ENCODE measurements at regions of chr12 and their contacts with region 1.

Region 1: GRCh38 chr12:12916135-12916944 is 25.0 kb downstream of the GPRC5A start:
- DNase-seq: peak; percentile 95

Region 2: DNA sequence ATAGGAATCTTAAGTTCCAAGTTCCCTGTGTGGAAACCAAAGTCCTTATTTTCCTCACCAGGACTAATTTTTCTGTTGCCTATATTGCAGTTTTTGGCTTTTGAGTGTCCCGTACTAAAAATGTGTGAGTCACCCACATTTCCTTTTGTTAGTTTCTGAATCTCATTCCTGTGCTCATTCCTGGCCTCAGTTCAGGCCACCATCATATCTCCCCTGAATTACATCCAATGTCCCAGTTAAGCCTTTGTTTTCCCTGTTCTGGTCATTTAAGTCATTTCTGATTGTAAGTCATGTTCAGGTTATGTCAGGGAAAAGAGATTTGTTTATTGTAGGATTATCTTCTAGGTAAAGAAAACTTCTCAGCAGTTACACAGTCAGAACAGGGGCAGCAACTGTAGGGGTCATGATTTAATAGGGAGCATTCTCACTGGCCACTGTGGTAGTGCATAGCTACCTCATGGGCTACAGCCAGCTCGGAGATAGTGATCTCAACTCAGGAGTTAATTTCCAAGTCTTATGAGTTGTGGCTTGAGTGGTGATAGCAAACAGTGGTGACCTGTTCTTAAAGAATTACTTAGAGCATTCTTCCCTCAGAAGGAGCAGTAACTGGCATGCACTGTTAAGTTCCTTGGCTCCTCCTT is 96.5 kb before region 1 on chr12:
- intact Hi-C with region 1: no loop called
- DNase-seq: no peak

Region 3: DNA sequence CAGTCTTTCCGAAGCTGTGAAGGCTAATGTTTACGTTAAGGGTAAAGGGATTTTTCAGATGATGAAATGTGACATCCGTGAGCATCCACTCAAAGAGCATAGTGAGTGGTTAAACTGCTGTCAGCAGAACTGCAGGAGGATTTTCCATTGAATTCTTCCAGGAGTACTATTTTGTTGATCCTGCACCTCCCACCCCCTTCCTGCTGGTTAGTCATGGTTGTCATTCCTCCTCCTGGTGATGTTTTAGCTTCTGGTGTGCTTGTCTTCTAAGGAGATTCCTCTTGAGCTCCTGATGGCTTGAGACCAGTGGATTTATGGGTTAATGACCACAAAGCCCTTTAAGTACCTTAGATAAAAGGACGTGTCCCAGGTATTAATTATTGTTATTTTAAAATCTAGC is 38.0 kb after region 1 on chr12:
- intact Hi-C with region 1: no loop called
- DNase-seq: no peak

Region 4: DNA sequence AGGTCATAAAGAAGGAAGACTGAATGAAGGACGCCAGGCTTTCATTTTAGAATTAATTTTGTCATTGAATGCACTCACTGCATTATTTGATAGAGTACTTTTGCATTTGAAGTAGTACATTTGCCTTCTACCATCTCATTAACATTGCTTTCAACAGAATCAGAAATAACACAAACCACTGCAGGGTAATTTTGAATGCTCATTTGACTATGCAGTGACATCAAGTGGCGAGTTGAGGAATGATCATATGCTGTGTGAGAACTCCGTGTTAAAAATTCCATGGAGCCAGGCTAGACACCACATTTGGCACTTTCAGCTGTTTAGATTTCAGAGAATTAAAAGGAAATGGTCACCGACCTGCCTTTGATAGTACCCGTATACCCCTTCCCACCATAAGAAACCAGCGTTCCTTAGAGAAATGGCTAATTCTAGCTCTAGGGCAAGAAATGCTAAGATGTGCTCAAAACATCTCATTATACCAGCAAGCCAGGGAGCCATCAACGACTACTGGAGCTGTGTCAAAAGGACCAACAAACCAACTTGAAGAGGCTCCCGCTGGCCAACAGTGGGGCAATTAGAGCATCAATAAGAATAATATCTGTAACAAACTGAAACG is 67.2 kb after region 1 on chr12:
- intact Hi-C with region 1: loop called (anchors 5 kb)
- DNase-seq: no peak

Region 5: GRCh38 chr12:13208533-13209435 is 292.4 kb after region 1 on chr12:
- intact Hi-C with region 1: loop called (anchors 5 to 10 kb)
- DNase-seq: no peak

Region 6: GRCh38 chr12:13233830-13234641 is 317.7 kb after region 1 on chr12:
- intact Hi-C with region 1: loop called in 1 of 2 experiments (anchors 5 kb)
- DNase-seq: no peak